CD14-positive monocyte (primary cell): ENCODE measurements at regions of chr9 and their contacts with region 1.

Region 1: DNA sequence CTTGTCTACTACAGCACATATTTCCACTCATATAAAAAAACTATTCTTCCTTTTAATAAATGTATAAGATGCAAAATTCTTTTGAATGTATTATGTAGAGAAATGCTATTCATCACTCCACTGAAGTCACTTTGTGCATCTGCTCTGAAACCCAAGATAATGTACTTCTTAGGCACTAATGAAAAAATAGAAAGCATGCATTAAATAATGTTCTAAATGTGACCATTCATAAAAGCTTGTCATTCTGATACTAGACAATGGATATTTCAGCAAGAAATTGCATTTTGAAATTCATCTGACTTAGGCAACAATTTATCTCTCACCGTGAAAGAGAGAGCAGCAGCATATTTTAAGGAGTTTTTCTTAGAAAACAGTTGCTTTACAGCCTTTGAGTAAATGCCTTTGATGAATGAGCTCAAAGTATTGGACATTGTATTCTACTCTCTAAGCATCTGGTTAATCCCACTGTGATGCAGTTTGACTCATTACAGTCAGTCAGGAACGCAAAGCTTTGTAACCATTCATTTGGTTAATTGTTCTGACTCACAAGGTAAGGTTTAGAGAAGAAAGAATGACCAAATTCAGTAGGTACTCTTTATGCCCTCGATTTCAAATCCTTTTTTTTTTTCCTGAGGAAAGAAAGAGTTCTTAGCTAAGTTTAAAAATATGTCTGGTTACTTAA is 2233.8 kb upstream of the C9orf72 start:
- DNase-seq: no peak
- H3K4me3 ChIP-seq: no peak overlapping the region
- H3K4me3 Mint-ChIP-seq: no peak overlapping the region
- H3K27ac ChIP-seq: no peak overlapping the region
- H3K27ac Mint-ChIP-seq: no peak overlapping the region
- H3K4me1 ChIP-seq: no peaks in the 10 kb centered on the region
- H3K4me1 Mint-ChIP-seq: no peaks in the 10 kb centered on the region
- H3K27me3 ChIP-seq: no peaks in the 10 kb centered on the region
- H3K27me3 Mint-ChIP-seq: no peaks in the 10 kb centered on the region
- CTCF ChIP-seq: no peak

Region 2: GRCh38 chr9:29740518-29740917 is 66.6 kb before region 1 on chr9:
- intact Hi-C with region 1: loop called in 1 of 2 experiments (anchors 10 kb)
- DNase-seq: no peak
- H3K4me3 ChIP-seq: no peak overlapping the region
- H3K4me3 Mint-ChIP-seq: no peak overlapping the region
- H3K27ac ChIP-seq: no peak overlapping the region
- H3K27ac Mint-ChIP-seq: no peak overlapping the region
- H3K4me1 ChIP-seq: no peaks in the 10 kb centered on the region
- H3K4me1 Mint-ChIP-seq: no peaks in the 10 kb centered on the region
- H3K27me3 ChIP-seq: no peaks in the 10 kb centered on the region
- H3K27me3 Mint-ChIP-seq: no peaks in the 10 kb centered on the region
- CTCF ChIP-seq: no peak

Region 3: GRCh38 chr9:30116673-30117217 is 309.7 kb after region 1 on chr9:
- intact Hi-C with region 1: no loop called
- DNase-seq: no peak
- H3K4me3 ChIP-seq: no peak overlapping the region
- H3K4me3 Mint-ChIP-seq: no peak overlapping the region
- H3K27ac ChIP-seq: no peak overlapping the region
- H3K27ac Mint-ChIP-seq: no peak overlapping the region
- H3K4me1 ChIP-seq: no peaks in the 10 kb centered on the region
- H3K4me1 Mint-ChIP-seq: no peaks in the 10 kb centered on the region
- H3K27me3 ChIP-seq: no peaks in the 10 kb centered on the region
- H3K27me3 Mint-ChIP-seq: no peaks in the 10 kb centered on the region
- CTCF ChIP-seq: no peak